B cell (primary cell): ENCODE measurements at regions of chr19 and their contacts with region 1.

Region 1: GRCh38 chr19:52897144-52897935 is at the start of gene ZNF320:
- DNase-seq: peak; percentile 95
- ATAC-seq: peak; percentile 100
- H3K4me3 ChIP-seq: peak within 1 kb of the TSS; percentile 85 to 98 (median 98)
- H3K4me3 Mint-ChIP-seq: peak within 1 kb of the TSS; percentile 96
- H3K27ac ChIP-seq: peak within 1 kb of the TSS; percentile 66 to 83
- H3K27ac Mint-ChIP-seq: peak within 1 kb of the TSS; percentile 94
- H3K4me1 ChIP-seq: peaks cover 5 to 17% of the 10 kb centered on the region in 2 donors
- H3K4me1 Mint-ChIP-seq: peaks cover 20% of the 10 kb centered on the region
- H3K27me3 ChIP-seq: no peaks in the 10 kb centered on the region
- H3K27me3 Mint-ChIP-seq: no peaks in the 10 kb centered on the region
- CTCF ChIP-seq: no peak
- total RNA-seq, gene ZNF320: 33.1 and 36.0 TPM in 2 replicates

Region 2: DNA sequence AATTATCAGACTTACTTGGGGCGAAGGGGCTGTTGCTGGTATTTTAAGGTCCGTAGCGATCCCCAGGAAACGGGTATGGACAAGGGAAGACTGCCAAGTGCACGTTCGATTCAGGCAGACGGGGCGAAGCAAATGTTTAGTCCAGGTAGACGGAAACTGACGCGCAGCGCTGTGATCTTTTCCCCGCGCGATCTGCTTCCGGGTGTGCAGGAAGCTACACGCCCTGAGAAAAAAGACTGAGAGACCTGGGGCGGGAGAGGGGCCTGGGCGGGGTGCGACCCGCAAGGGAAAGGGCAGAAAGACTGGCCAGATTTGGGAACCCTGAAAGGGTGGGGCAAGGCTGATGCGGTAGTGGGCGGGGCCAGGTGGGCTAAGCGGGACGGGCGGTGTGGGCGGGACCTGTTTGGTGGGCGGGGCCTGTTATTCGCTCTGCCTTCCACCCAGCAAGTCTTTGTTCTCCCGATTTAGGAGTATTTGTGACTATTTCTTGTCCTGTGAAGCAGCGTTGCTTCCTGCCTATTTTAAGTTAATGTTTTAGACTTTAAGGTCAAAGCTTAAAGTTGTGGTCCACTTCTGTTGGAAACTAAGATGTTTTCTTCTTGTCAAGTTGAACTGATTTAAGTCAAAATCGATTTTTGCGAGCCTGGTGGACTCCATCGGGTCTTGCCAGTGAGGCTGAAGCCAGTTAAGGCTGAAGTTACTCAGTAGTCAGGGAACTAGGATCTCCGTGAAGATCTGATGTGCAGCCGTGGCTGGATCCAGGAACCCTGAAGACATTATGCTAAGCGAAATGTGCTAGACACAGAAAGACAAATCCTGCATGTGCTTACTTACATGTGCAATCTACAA is 725.8 kb before region 1 on chr19 and contains the start of gene ZNF836:
- CTCF ChIA-PET with region 1: no interaction called
- POLR2A ChIA-PET with region 1: no interaction called
- intact Hi-C with region 1: loop called (anchors 1 kb)
- DNase-seq: peak; percentile 92
- ATAC-seq: peak; percentile 98
- H3K4me3 ChIP-seq: peak within 1 kb of the TSS; percentile 71 to 100 (median 82)
- H3K4me3 Mint-ChIP-seq: peak within 1 kb of the TSS; percentile 98
- H3K27ac ChIP-seq: peak within 1 kb of the TSS; percentile 66 to 90
- H3K27ac Mint-ChIP-seq: peak within 1 kb of the TSS; percentile 97
- H3K4me1 ChIP-seq: peaks cover 17 to 20% of the 10 kb centered on the region in 2 donors
- H3K4me1 Mint-ChIP-seq: peaks cover 35% of the 10 kb centered on the region
- H3K27me3 ChIP-seq: no peaks in the 10 kb centered on the region
- H3K27me3 Mint-ChIP-seq: no peaks in the 10 kb centered on the region
- CTCF ChIP-seq: no peak
- total RNA-seq, gene ZNF836: 42.0 and 46.4 TPM in 2 replicates

Region 3: DNA sequence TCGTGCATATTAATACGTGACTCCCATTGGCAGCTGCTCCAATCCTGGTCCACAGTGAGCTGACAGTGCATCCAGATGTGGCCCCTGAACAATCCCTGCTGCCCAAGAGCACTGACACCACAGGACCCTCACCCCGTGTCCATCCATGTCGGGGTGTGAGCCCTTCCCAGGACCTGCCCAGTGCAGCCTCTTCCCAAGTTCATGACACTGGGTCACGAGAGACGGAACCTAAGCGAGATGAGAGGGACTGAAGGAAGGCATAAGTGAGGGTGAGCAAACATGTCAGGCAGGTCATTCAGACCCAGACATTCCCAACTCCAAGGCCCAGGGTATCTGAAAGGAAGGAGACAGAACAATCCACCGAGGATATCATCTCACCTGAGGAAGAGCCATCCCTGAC is 43.5 kb before region 1 on chr19:
- CTCF ChIA-PET with region 1: no interaction called
- POLR2A ChIA-PET with region 1: interaction called, 6 read pairs
- intact Hi-C with region 1: loop called (anchors 1 kb)
- DNase-seq: no peak
- ATAC-seq: no peak
- H3K4me3 ChIP-seq: no peak overlapping the region
- H3K4me3 Mint-ChIP-seq: no peak overlapping the region
- H3K27ac ChIP-seq: no peak overlapping the region
- H3K27ac Mint-ChIP-seq: peak overlapping the region; percentile 15
- H3K4me1 ChIP-seq: peaks cover 3 to 5% of the 10 kb centered on the region in 2 donors
- H3K4me1 Mint-ChIP-seq: peaks cover 22% of the 10 kb centered on the region
- H3K27me3 ChIP-seq: no peaks in the 10 kb centered on the region
- H3K27me3 Mint-ChIP-seq: no peaks in the 10 kb centered on the region
- CTCF ChIP-seq: no peak

Region 4: GRCh38 chr19:52922841-52923777 is 25.8 kb after region 1 on chr19 and contains the start of gene ZNF888:
- CTCF ChIA-PET with region 1: no interaction called
- POLR2A ChIA-PET with region 1: no interaction called
- intact Hi-C with region 1: loop called (anchors 2 kb)
- DNase-seq: peak; percentile 89
- ATAC-seq: peak; percentile 100
- H3K4me3 ChIP-seq: peak within 1 kb of the TSS; percentile 82 to 97 (median 88)
- H3K4me3 Mint-ChIP-seq: peak within 1 kb of the TSS; percentile 97
- H3K27ac ChIP-seq: peak within 1 kb of the TSS; percentile 66 to 84
- H3K27ac Mint-ChIP-seq: peak within 1 kb of the TSS; percentile 93
- H3K4me1 ChIP-seq: peaks cover 11 to 18% of the 10 kb centered on the region in 2 donors
- H3K4me1 Mint-ChIP-seq: peaks cover 28% of the 10 kb centered on the region
- H3K27me3 ChIP-seq: no peaks in the 10 kb centered on the region
- H3K27me3 Mint-ChIP-seq: no peaks in the 10 kb centered on the region
- CTCF ChIP-seq: no peak
- total RNA-seq, gene ZNF888: 15.3 and 15.6 TPM in 2 replicates

Region 5: GRCh38 chr19:52962394-52963246 is 65.3 kb after region 1 on chr19 and contains the start of gene ZNF816:
- CTCF ChIA-PET with region 1: no interaction called
- POLR2A ChIA-PET with region 1: no interaction called
- intact Hi-C with region 1: loop called (anchors 1 kb)
- DNase-seq: peak; percentile 96
- ATAC-seq: peak; percentile 100
- H3K4me3 ChIP-seq: peak within 1 kb of the TSS; percentile 72 to 92 (median 80)
- H3K4me3 Mint-ChIP-seq: peak within 1 kb of the TSS; percentile 92
- H3K27ac ChIP-seq: peak within 1 kb of the TSS; percentile 50 to 69
- H3K27ac Mint-ChIP-seq: peak within 1 kb of the TSS; percentile 92
- H3K4me1 ChIP-seq: peaks cover 14 to 19% of the 10 kb centered on the region in 2 donors
- H3K4me1 Mint-ChIP-seq: peaks cover 32% of the 10 kb centered on the region
- H3K27me3 ChIP-seq: no peaks in the 10 kb centered on the region
- H3K27me3 Mint-ChIP-seq: no peaks in the 10 kb centered on the region
- CTCF ChIP-seq: no peak
- total RNA-seq, gene ZNF816: 22.3 and 25.0 TPM in 2 replicates

Region 6: GRCh38 chr19:53365134-53365898 is 468.0 kb after region 1 on chr19 and contains the start of gene ZNF525:
- CTCF ChIA-PET with region 1: no interaction called
- POLR2A ChIA-PET with region 1: no interaction called
- intact Hi-C with region 1: loop called (anchors 1 kb)
- DNase-seq: peak; percentile 97
- ATAC-seq: peak; percentile 100
- H3K4me3 ChIP-seq: peak within 1 kb of the TSS; percentile 79 to 99 (median 90)
- H3K4me3 Mint-ChIP-seq: peak within 1 kb of the TSS; percentile 93
- H3K27ac ChIP-seq: peak within 1 kb of the TSS; percentile 66 to 91
- H3K27ac Mint-ChIP-seq: peak within 1 kb of the TSS; percentile 94
- H3K4me1 ChIP-seq: peaks cover 9 to 11% of the 10 kb centered on the region in 2 donors
- H3K4me1 Mint-ChIP-seq: peaks cover 25% of the 10 kb centered on the region
- H3K27me3 ChIP-seq: no peaks in the 10 kb centered on the region
- H3K27me3 Mint-ChIP-seq: no peaks in the 10 kb centered on the region
- CTCF ChIP-seq: peak; percentile 63
- total RNA-seq, gene ZNF525: 33.8 and 34.3 TPM in 2 replicates